PC-3 (cell line): ENCODE measurements at regions of chr7 and their contacts with region 1.

Region 1: GRCh38 chr7:90262438-90262837 is 17.5 kb downstream of the CFAP69 start:
- DNase-seq: peak; percentile 70
- ATAC-seq: peak; percentile 82
- H3K4me3 ChIP-seq: no peak overlapping the region
- H3K27ac ChIP-seq: no peak overlapping the region
- H3K4me1 ChIP-seq: peaks cover 9% of the 10 kb centered on the region
- H3K27me3 ChIP-seq: no peaks in the 10 kb centered on the region
- CTCF ChIP-seq: peak; percentile 57

Region 2: DNA sequence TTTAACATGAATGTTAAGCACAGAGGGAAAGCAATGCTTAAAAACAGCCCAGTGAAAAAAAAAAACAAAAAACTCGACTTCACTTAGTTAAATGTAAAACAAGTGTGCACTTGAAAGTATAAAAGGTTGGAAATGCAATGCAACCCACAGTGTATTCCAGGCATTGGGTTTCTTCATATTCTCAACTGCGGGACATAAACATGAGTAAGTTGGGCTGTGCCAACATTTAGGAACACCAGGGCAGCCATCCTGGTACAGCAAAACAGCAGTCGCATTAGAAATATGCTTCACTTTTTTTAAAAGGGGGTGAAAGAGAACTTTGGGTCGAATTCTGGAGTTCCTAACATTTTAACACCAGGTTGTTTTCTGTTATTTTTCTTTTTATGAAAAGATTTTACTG is 107.2 kb before region 1 on chr7:
- CTCF ChIA-PET with region 1: interaction called, 4 read pairs
- POLR2A ChIA-PET with region 1: no interaction called
- intact Hi-C with region 1: loop called (anchors 1 kb)
- DNase-seq: no peak
- ATAC-seq: no peak
- H3K4me3 ChIP-seq: peak overlapping the region; percentile 86
- H3K27ac ChIP-seq: no peak overlapping the region
- H3K4me1 ChIP-seq: peaks cover 34% of the 10 kb centered on the region
- H3K27me3 ChIP-seq: no peaks in the 10 kb centered on the region
- CTCF ChIP-seq: no peak

Region 3: GRCh38 chr7:90244909-90245851 is 17.3 kb before region 1 on chr7 and contains the start of gene CFAP69:
- CTCF ChIA-PET with region 1: interaction called, 3 read pairs
- POLR2A ChIA-PET with region 1: no interaction called
- intact Hi-C with region 1: loop called (anchors 2 kb)
- DNase-seq: peak; percentile 85
- ATAC-seq: peak; percentile 88
- H3K4me3 ChIP-seq: peak within 1 kb of the TSS; percentile 97
- H3K27ac ChIP-seq: no peak within 1 kb of the TSS
- H3K4me1 ChIP-seq: peaks cover 25% of the 10 kb centered on the region
- H3K27me3 ChIP-seq: no peaks in the 10 kb centered on the region
- CTCF ChIP-seq: no peak
- total RNA-seq, gene CFAP69: 3.1 and 6.6 TPM in 2 replicates

Region 4: GRCh38 chr7:90298145-90299038 is 36.0 kb after region 1 on chr7:
- CTCF ChIA-PET with region 1: no interaction called
- POLR2A ChIA-PET with region 1: no interaction called
- intact Hi-C with region 1: loop called (anchors 2 kb)
- DNase-seq: peak; percentile 71
- ATAC-seq: peak; percentile 100
- H3K4me3 ChIP-seq: no peak overlapping the region
- H3K27ac ChIP-seq: no peak overlapping the region
- H3K4me1 ChIP-seq: peaks cover 21% of the 10 kb centered on the region
- H3K27me3 ChIP-seq: no peaks in the 10 kb centered on the region
- CTCF ChIP-seq: peak; percentile 82